ENCODE measurements at regions of chr1 and their contacts with region 1.

Region 1: GRCh38 chr1:20696397-20697329 is 21.1 kb downstream of the KIF17 start:
- DNase-seq: peak; percentile 93
- H3K4me3 ChIP-seq: peak overlapping the region; percentile 42 to 77 (median 52)
- H3K27ac ChIP-seq: peak overlapping the region; percentile 32 to 86 (median 77)
- H3K4me1 ChIP-seq: peaks cover 3 to 19% (median 12%) of the 10 kb centered on the region in 6 donors
- H3K27me3 ChIP-seq: no peaks in the 10 kb centered on the region
- CTCF ChIP-seq: peak; percentile 64 to 98 (median 94)
- POLR2A ChIP-seq: no peak

Region 2: DNA sequence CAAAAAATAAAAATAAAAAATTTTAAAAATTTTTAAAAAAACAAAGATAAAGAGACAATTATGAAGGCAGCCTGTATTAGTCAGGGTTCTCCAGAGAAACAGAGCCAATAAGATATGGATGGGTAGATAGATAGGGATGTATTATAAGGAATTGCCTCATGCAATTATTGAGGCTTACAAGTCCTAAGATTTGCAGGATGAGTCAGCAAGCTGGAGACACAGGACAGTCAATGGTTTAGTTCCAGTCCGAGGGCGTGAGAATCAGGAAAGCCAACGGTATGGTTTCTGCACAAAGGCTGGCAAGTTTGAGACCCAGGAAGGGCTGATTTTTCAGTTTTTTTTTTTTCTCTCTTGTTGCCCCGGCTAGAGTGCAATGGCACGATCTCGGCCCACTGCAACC is 504.1 kb after region 1 on chr1:
- intact Hi-C with region 1: loop called (anchors 2 kb)
- DNase-seq: no peak
- H3K4me3 ChIP-seq: no peak overlapping the region
- H3K27ac ChIP-seq: no peak overlapping the region
- H3K4me1 ChIP-seq: no peaks in the 10 kb centered on the region
- H3K27me3 ChIP-seq: no peaks in the 10 kb centered on the region
- CTCF ChIP-seq: no peak
- POLR2A ChIP-seq: no peak

Measured in spleen (tissue), 13 donors.